HepG2 (cell line): ENCODE measurements at regions of chr4 and their contacts with region 1.

Region 1: GRCh38 chr4:129167640-129168260 is 71.8 kb downstream of the C4orf33 start:
- DNase-seq: peak; percentile 7
- ATAC-seq: peak; percentile 92
- H3K4me3 ChIP-seq: no peak overlapping the region
- H3K27ac ChIP-seq: no peak overlapping the region
- H3K4me1 ChIP-seq: no peaks in the 10 kb centered on the region
- H3K27me3 ChIP-seq: peaks cover 0 to 2% of the 10 kb centered on the region in 2 experiments; a peak in 1 of 5 replicates
- CTCF ChIP-seq: peak; percentile 48
- EP300 ChIP-seq: no peak
- POLR2A ChIP-seq: no peak
- RAD21 ChIP-seq: no peak

Region 2: DNA sequence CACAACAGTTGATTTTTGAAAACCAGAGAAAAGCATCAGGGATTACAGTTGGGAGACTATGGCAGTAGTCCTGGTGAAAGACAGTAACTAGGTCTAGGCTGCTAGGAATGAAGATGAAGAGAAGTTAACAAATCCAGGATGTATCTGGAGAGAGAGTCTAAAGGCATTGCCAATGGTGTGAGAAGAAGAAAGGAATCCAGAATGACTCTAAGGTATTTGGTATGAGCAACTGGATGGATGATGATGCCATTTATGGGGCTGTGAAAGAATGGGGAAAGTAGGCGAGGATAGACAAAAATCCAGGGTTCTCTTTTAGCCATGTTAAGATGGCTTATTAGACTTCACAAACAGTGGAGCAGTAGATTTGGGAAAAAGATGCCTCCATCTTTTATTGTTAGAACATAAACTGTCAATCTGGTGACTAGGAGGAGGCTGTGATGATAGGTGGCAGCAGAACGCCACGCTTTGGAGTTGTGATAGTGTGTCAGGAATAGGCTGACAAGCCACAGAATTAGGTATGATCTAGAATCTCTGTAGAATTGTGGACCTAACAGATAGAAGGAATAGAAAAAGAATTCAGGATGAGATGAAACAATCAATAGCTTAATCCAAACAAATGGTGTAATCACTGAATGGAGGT is 385.6 kb before region 1 on chr4:
- CTCF ChIA-PET with region 1: interaction called, 3 read pairs
- POLR2A ChIA-PET with region 1: no interaction called
- in situ Hi-C with region 1: no loop called
- intact Hi-C with region 1: loop called (anchors 1 kb)
- DNase-seq: peak; percentile 28
- ATAC-seq: peak; percentile 91
- H3K4me3 ChIP-seq: no peak overlapping the region
- H3K27ac ChIP-seq: no peak overlapping the region
- H3K4me1 ChIP-seq: no peaks in the 10 kb centered on the region
- H3K27me3 ChIP-seq: no peaks in the 10 kb centered on the region
- CTCF ChIP-seq: peak; percentile 65
- EP300 ChIP-seq: no peak
- POLR2A ChIP-seq: no peak
- RAD21 ChIP-seq: 0 out of 2 replicates have a peak, but pooled peaks have one; percentile 16

Region 3: GRCh38 chr4:129043523-129043922 is 124.2 kb before region 1 on chr4:
- CTCF ChIA-PET with region 1: no interaction called
- POLR2A ChIA-PET with region 1: no interaction called
- in situ Hi-C with region 1: no loop called
- intact Hi-C with region 1: loop called (anchors 1 kb)
- DNase-seq: peak; percentile 7
- ATAC-seq: no peak
- H3K4me3 ChIP-seq: no peak overlapping the region
- H3K27ac ChIP-seq: no peak overlapping the region
- H3K4me1 ChIP-seq: no peaks in the 10 kb centered on the region
- H3K27me3 ChIP-seq: no peaks in the 10 kb centered on the region
- CTCF ChIP-seq: peak; percentile 38
- EP300 ChIP-seq: no peak
- POLR2A ChIP-seq: no peak
- RAD21 ChIP-seq: no peak

Region 4: GRCh38 chr4:129064717-129065116 is 103.0 kb before region 1 on chr4:
- CTCF ChIA-PET with region 1: no interaction called
- POLR2A ChIA-PET with region 1: no interaction called
- in situ Hi-C with region 1: no loop called
- intact Hi-C with region 1: no loop called
- DNase-seq: no peak
- ATAC-seq: no peak
- H3K4me3 ChIP-seq: no peak overlapping the region
- H3K27ac ChIP-seq: no peak overlapping the region
- H3K4me1 ChIP-seq: no peaks in the 10 kb centered on the region
- H3K27me3 ChIP-seq: no peaks in the 10 kb centered on the region
- CTCF ChIP-seq: no peak
- EP300 ChIP-seq: no peak
- POLR2A ChIP-seq: no peak
- RAD21 ChIP-seq: no peak

Region 5: GRCh38 chr4:129323658-129324057 is 155.9 kb after region 1 on chr4:
- CTCF ChIA-PET with region 1: no interaction called
- POLR2A ChIA-PET with region 1: no interaction called
- in situ Hi-C with region 1: no loop called
- intact Hi-C with region 1: no loop called
- DNase-seq: no peak
- ATAC-seq: no peak
- H3K4me3 ChIP-seq: no peak overlapping the region
- H3K27ac ChIP-seq: no peak overlapping the region
- H3K4me1 ChIP-seq: no peaks in the 10 kb centered on the region
- H3K27me3 ChIP-seq: no peaks in the 10 kb centered on the region
- CTCF ChIP-seq: no peak
- EP300 ChIP-seq: no peak
- POLR2A ChIP-seq: no peak
- RAD21 ChIP-seq: no peak